ENCODE measurements at regions of chrX and their contacts with region 1.

Region 1: DNA sequence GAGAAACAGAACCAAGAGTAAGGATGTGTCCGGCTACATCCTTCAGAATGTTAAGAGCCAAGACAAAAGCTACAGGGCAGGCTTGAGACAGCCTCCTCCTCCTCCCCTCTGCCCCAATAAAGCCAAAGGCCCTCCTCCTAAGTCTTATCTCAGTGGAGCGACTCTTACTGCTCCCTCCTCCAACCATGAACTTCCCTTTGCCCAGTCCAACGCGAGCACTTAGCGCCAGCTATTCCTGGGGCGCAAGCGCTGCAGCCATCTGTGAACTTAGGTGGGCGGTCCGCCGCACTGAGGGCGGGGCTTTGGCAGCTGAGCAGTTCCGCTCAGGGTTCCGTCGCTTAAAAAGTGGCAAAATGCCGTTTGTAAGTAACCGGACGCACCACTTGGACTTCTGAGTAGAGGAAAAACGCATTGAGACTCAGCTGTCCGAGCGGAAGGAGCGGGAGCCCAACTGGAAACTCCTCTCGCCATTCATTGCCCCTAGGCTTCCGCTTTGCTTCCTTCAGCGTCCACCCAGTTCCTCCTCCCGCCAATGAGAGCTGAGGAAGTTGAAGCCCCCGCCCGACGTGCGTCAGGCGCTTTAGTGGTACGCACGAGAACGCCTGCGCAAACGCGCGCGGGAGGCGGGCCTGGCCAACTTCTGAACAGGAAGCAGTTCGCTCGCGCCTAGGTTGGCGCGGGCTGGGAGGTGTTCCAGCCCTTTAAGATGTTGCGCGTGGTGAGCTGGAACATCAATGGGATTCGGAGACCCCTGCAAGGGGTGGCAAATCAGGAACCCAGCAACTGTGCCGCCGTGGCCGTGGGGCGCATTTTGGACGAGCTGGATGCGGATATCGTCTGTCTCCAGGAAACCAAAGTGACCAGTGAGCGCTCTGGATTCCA is at the start of gene APEX2:
- DNase-seq: peak; percentile 74
- ATAC-seq: peak; percentile 95
- H3K4me3 Mint-ChIP-seq: peak within 1 kb of the TSS; percentile 94
- H3K27ac Mint-ChIP-seq: peak within 1 kb of the TSS; percentile 89
- H3K4me1 Mint-ChIP-seq: peaks cover 19% of the 10 kb centered on the region
- H3K27me3 Mint-ChIP-seq: no peaks in the 10 kb centered on the region
- CTCF ChIP-seq: no peak
- total RNA-seq, gene APEX2: 19.6 and 22.2 TPM in 2 replicates

Region 2: DNA sequence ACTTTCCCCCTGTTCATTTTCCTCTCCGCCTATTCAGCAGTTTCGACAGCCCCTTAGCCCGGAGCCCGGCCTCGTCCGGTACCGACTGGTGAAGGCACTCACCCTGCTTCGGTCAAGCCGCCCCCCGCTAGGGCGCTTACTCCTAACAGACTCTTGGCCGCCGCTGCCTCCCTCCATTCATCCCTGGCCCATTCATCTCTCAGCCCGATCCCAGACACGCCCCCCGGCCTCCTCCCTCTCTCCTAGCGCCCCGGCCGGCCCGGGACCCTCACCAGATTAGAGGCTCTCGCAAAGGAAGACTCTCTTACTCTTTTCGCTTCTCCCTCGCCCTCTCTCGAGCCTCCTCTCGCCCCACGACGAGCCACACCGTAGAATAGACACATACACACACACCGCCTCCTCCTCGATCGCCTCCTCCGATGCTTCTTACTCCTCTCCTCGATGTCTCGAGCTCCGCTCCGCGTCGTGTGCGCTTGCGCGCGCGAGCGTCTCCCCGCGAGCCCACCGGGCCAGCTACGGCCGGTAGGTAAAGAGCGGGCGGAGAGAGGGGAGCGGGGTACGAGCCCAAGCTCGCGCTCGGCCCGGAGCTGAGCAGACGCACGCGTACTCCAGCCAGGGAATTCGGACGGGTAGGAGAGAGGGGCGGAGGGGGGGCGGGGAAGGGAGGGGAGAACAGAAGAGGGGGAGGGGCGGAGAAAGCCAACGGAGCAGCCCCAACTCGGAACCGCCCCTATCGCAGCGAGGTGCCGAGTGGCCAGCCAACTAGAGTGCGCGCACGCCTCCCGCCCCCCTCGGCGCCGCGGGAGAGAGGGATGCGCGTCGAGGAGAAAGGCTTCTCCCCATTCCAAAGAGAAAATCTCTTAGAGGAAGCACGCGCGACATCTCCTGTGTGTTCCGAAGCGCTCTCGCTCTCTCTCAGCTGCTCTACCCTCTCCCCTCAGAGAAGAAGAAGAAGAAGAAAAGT is 642.3 kb before region 1 on chrX and contains the start of gene WNK3:
- CTCF ChIA-PET with region 1: no interaction called
- POLR2A ChIA-PET with region 1: interaction called, 8 read pairs
- intact Hi-C with region 1: loop called (anchors 2 kb)
- DNase-seq: peak; percentile 22
- ATAC-seq: peak; percentile 61
- H3K4me3 Mint-ChIP-seq: peak within 1 kb of the TSS; percentile 85
- H3K27ac Mint-ChIP-seq: peak within 1 kb of the TSS; percentile 59
- H3K4me1 Mint-ChIP-seq: peaks cover 20% of the 10 kb centered on the region
- H3K27me3 Mint-ChIP-seq: peaks cover 10% of the 10 kb centered on the region
- CTCF ChIP-seq: no peak
- total RNA-seq, gene WNK3: 0.40 and 0.46 TPM in 2 replicates

Region 3: GRCh38 chrX:54439967-54440871 is 559.7 kb before region 1 on chrX and contains the start of gene TSR2:
- CTCF ChIA-PET with region 1: no interaction called
- POLR2A ChIA-PET with region 1: interaction called, 8 read pairs
- intact Hi-C with region 1: loop called (anchors 10 kb)
- DNase-seq: peak; percentile 59
- ATAC-seq: peak; percentile 98
- H3K4me3 Mint-ChIP-seq: peak within 1 kb of the TSS; percentile 91
- H3K27ac Mint-ChIP-seq: peak within 1 kb of the TSS; percentile 76
- H3K4me1 Mint-ChIP-seq: peaks cover 29% of the 10 kb centered on the region
- H3K27me3 Mint-ChIP-seq: no peaks in the 10 kb centered on the region
- CTCF ChIP-seq: no peak
- total RNA-seq, gene TSR2: 35.9 and 42.4 TPM in 2 replicates

Region 4: GRCh38 chrX:54529552-54530357 is 470.2 kb before region 1 on chrX and contains the start of gene GNL3L:
- CTCF ChIA-PET with region 1: no interaction called
- POLR2A ChIA-PET with region 1: interaction called, 13 read pairs
- intact Hi-C with region 1: no loop called
- DNase-seq: peak; percentile 66
- ATAC-seq: peak; percentile 83
- H3K4me3 Mint-ChIP-seq: peak within 1 kb of the TSS; percentile 94
- H3K27ac Mint-ChIP-seq: peak within 1 kb of the TSS; percentile 97
- H3K4me1 Mint-ChIP-seq: peaks cover 43% of the 10 kb centered on the region
- H3K27me3 Mint-ChIP-seq: no peaks in the 10 kb centered on the region
- CTCF ChIP-seq: no peak
- total RNA-seq, gene GNL3L: 67.1 and 70.5 TPM in 2 replicates

Region 5: DNA sequence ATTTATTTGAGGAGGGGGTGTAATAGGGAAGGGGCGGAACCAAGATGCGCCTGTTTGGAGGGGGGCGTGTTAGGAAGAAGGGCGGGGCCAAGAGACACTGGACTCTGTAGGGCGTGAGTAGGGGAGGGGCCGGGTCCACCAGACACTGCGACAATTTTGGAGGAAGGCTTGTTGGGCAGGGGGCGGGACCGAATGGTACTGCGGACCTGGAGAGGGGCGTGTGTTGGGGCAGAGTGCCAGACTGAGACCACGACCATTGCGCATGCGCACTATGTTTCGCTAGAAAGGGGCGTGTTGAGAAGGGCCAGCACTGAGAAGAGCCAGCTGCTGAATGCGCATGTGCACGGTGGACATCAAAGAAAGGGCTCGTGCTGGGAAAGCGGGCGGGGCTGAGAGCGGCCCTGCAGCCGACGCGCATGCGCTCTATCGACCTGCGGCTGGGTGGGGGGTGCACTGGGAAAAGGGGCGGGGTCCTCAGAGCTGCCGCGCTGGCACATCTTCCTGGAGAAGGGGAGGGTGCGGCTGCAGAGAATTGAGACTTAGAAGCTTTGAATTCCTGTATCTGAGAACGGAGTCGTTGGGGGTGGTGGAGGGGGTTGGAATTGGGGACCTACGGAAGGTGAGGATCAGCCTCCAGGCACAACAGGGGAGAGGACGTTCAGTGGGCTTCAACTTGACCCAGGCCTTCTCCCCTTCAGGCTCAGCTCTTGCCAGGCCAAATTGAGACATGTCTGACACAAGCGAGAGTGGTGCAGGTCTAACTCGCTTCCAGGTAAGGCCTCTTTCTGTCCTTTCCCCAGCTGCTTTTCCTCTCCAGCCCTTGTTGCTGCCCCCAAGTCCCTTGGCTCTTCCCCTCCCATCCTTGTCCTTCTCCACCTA is 191.1 kb before region 1 on chrX:
- CTCF ChIA-PET with region 1: no interaction called
- POLR2A ChIA-PET with region 1: interaction called, 17 read pairs
- intact Hi-C with region 1: loop called (anchors 1 kb)
- DNase-seq: peak; percentile 73
- ATAC-seq: peak; percentile 96
- H3K4me3 Mint-ChIP-seq: peak overlapping the region; percentile 92
- H3K27ac Mint-ChIP-seq: peak overlapping the region; percentile 91
- H3K4me1 Mint-ChIP-seq: peaks cover 14% of the 10 kb centered on the region
- H3K27me3 Mint-ChIP-seq: no peaks in the 10 kb centered on the region
- CTCF ChIP-seq: no peak